CD8-positive, alpha-beta T cell (primary cell): ENCODE measurements at regions of chr1 and their contacts with region 1.

Region 1: DNA sequence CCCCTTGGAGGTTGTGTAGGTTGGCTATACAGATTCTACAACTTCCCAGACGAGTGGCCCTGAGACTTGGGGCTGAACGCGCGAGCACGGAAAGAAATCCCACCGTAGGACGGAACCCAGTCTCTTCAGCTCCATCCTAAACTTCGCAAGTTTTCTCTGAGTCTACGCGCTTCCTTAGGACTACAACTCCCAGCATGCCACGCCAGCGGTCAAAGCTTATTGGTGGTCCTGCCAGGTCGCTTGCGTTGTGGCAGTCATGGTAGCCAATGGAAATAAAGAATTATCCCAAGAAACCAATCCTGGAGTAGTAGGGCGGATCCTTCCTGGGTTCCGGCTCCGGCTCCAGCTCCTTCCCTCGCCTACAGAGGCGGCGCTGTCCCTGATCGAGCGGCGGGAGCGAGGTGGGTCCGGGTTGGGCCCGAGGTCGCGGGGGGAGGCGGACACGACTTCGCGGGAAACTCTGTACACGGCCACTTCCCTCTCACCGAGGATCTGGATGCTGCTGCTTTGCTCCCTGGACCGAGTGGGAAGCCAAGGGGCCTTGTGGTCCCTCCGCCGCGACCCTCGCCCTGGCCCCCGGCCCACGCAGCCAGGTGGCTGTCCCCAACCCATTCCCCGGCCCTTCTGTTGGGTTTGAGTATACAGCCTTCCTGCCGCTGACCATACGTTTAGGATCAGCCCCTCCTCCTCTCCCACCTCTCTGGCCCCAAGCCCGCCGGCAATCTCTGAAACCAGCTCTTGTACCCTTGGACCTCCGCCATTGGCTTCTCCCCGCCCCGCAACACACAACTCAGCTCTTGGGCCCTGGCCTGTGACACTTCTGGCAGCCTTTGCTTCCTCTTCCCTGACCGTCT is at the start of gene ZNF691:
- DNase-seq: peak; percentile 71 to 96 (median 87)
- ATAC-seq: peak; percentile 97
- H3K4me3 ChIP-seq: peak within 1 kb of the TSS; percentile 74 to 96
- H3K4me3 Mint-ChIP-seq: peak within 1 kb of the TSS; percentile 92
- H3K27ac ChIP-seq: peak within 1 kb of the TSS; percentile 46 to 72
- H3K27ac Mint-ChIP-seq: peak within 1 kb of the TSS; percentile 88
- H3K4me1 ChIP-seq: peaks cover 23% of the 10 kb centered on the region
- H3K4me1 Mint-ChIP-seq: peaks cover 38% of the 10 kb centered on the region
- H3K27me3 ChIP-seq: no peaks in the 10 kb centered on the region
- H3K27me3 Mint-ChIP-seq: no peaks in the 10 kb centered on the region
- CTCF ChIP-seq: no peak
- total RNA-seq, gene ZNF691: 1.1 to 1.3 TPM

Region 2: GRCh38 chr1:42456010-42456758 is 390.3 kb before region 1 on chr1 and contains the starts of genes PPCS and ZMYND12:
- CTCF ChIA-PET with region 1: no interaction called
- POLR2A ChIA-PET with region 1: no interaction called
- intact Hi-C with region 1: loop called in 1 of 2 experiments (anchors 5 kb)
- DNase-seq: peak; percentile 82 to 98 (median 91)
- ATAC-seq: peak; percentile 92
- H3K4me3 ChIP-seq: peak within 1 kb of the TSS; percentile 99
- H3K4me3 Mint-ChIP-seq: peak within 1 kb of the TSS; percentile 98
- H3K27ac ChIP-seq: peak within 1 kb of the TSS; percentile 99 to 100
- H3K27ac Mint-ChIP-seq: peak within 1 kb of the TSS; percentile 100
- H3K4me1 ChIP-seq: peaks cover 25% of the 10 kb centered on the region
- H3K4me1 Mint-ChIP-seq: peaks cover 37% of the 10 kb centered on the region
- H3K27me3 ChIP-seq: no peaks in the 10 kb centered on the region
- H3K27me3 Mint-ChIP-seq: no peaks in the 10 kb centered on the region
- CTCF ChIP-seq: peak; percentile 34
- total RNA-seq, gene PPCS: 38.0 to 38.1 TPM
- total RNA-seq, gene ZMYND12: 0.56 to 0.76 TPM

Region 3: DNA sequence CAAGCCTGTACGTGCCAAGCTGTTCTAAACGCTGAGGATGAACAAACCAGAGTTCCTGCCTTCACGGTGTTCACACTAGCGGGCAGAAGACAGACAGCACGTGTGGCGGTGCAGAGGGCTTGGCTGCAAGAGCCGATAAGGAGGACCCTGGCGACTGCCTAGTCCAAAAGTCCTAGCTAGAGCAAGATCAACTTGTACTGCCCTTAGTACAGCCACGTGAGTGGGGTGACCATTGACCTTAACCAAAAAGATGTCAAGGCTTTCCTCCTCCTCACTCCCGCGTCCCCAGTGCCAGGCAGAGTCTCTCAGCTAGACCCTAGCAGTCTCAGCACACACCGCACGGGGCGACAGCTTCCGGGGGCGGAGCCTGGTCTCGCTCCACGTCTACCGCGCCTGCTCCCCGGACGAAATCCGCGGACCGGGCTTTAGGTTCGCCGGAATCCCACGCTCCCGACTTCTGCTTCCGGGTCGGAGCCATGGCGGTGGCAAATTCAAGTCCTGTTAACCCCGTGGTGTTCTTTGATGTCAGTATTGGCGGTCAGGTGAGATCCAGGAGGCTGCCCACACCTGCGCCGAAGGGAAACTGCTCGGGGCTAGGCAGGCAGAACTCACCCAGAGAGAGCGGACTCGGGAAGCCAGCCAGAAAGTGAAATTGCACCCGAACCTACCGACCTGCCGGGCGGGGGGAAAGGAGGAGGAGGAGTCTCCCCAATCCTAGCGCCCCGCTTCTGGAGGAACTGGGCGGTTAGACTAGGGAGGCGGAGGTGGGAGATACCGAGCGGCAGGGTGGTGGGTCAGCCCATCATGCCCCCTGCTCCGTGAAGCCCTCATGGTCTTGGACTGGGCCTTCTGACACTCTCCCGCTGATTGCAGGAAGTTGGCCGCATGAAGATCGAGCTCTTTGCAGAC is 188.3 kb before region 1 on chr1 and contains the start of gene PPIH:
- CTCF ChIA-PET with region 1: no interaction called
- POLR2A ChIA-PET with region 1: interaction called, 8 read pairs
- intact Hi-C with region 1: loop called (anchors 1 kb)
- DNase-seq: peak; percentile 87 to 97 (median 95)
- ATAC-seq: peak; percentile 98
- H3K4me3 ChIP-seq: peak within 1 kb of the TSS; percentile 78 to 90
- H3K4me3 Mint-ChIP-seq: peak within 1 kb of the TSS; percentile 99
- H3K27ac ChIP-seq: peak within 1 kb of the TSS; percentile 54 to 81
- H3K27ac Mint-ChIP-seq: peak within 1 kb of the TSS; percentile 87
- H3K4me1 ChIP-seq: peaks cover 24% of the 10 kb centered on the region
- H3K4me1 Mint-ChIP-seq: peaks cover 45% of the 10 kb centered on the region
- H3K27me3 ChIP-seq: no peaks in the 10 kb centered on the region
- H3K27me3 Mint-ChIP-seq: no peaks in the 10 kb centered on the region
- CTCF ChIP-seq: no peak
- total RNA-seq, gene PPIH: 31.0 to 33.2 TPM

Region 4: GRCh38 chr1:42681741-42682483 is 164.6 kb before region 1 on chr1 and contains the start of gene YBX1:
- CTCF ChIA-PET with region 1: no interaction called
- POLR2A ChIA-PET with region 1: interaction called, 3 read pairs
- intact Hi-C with region 1: loop called (anchors 1 to 10 kb)
- DNase-seq: peak; percentile 88 to 98 (median 95)
- ATAC-seq: peak; percentile 89
- H3K4me3 ChIP-seq: peak within 1 kb of the TSS; percentile 81 to 84
- H3K4me3 Mint-ChIP-seq: peak within 1 kb of the TSS; percentile 99
- H3K27ac ChIP-seq: peak within 1 kb of the TSS; percentile 82 to 88
- H3K27ac Mint-ChIP-seq: peak within 1 kb of the TSS; percentile 97
- H3K4me1 ChIP-seq: peaks cover 43% of the 10 kb centered on the region
- H3K4me1 Mint-ChIP-seq: peaks cover 58% of the 10 kb centered on the region
- H3K27me3 ChIP-seq: no peaks in the 10 kb centered on the region
- H3K27me3 Mint-ChIP-seq: no peaks in the 10 kb centered on the region
- CTCF ChIP-seq: no peak
- total RNA-seq, gene YBX1: 440 to 450 TPM

Region 5: GRCh38 chr1:42877380-42877779 is 30.9 kb after region 1 on chr1:
- CTCF ChIA-PET with region 1: no interaction called
- POLR2A ChIA-PET with region 1: no interaction called
- intact Hi-C with region 1: no loop called
- DNase-seq: no peak
- ATAC-seq: no peak
- H3K4me3 ChIP-seq: no peak overlapping the region
- H3K4me3 Mint-ChIP-seq: no peak overlapping the region
- H3K27ac ChIP-seq: no peak overlapping the region
- H3K27ac Mint-ChIP-seq: no peak overlapping the region
- H3K4me1 ChIP-seq: no peaks in the 10 kb centered on the region
- H3K4me1 Mint-ChIP-seq: no peaks in the 10 kb centered on the region
- H3K27me3 ChIP-seq: no peaks in the 10 kb centered on the region
- H3K27me3 Mint-ChIP-seq: peaks cover 5% of the 10 kb centered on the region
- CTCF ChIP-seq: no peak